ENCODE measurements at regions of chr17 and their contacts with region 1.

Region 1: GRCh38 chr17:67441052-67441927 is 64.2 kb downstream of the PITPNC1 start:
- DNase-seq: peak; percentile 90
- ATAC-seq: peak; percentile 90
- H3K4me3 Mint-ChIP-seq: peak overlapping the region; percentile 77
- H3K27ac Mint-ChIP-seq: peak overlapping the region; percentile 97
- H3K4me1 Mint-ChIP-seq: peaks cover 71% of the 10 kb centered on the region
- H3K27me3 Mint-ChIP-seq: no peaks in the 10 kb centered on the region
- CTCF ChIP-seq: no peak

Region 2: GRCh38 chr17:67353929-67354574 is 87.2 kb before region 1 on chr17:
- CTCF ChIA-PET with region 1: no interaction called
- POLR2A ChIA-PET with region 1: no interaction called
- intact Hi-C with region 1: no loop called
- DNase-seq: no peak
- ATAC-seq: no peak
- H3K4me3 Mint-ChIP-seq: no peak overlapping the region
- H3K27ac Mint-ChIP-seq: no peak overlapping the region
- H3K4me1 Mint-ChIP-seq: peaks cover 19% of the 10 kb centered on the region
- H3K27me3 Mint-ChIP-seq: no peaks in the 10 kb centered on the region
- CTCF ChIP-seq: no peak

Region 3: GRCh38 chr17:67421869-67422273 is 19.4 kb before region 1 on chr17:
- CTCF ChIA-PET with region 1: interaction called, 3 read pairs
- POLR2A ChIA-PET with region 1: interaction called, 5 read pairs
- intact Hi-C with region 1: loop called (anchors 2 kb)
- DNase-seq: peak; percentile 71
- ATAC-seq: peak; percentile 95
- H3K4me3 Mint-ChIP-seq: peak overlapping the region; percentile 33
- H3K27ac Mint-ChIP-seq: peak overlapping the region; percentile 88
- H3K4me1 Mint-ChIP-seq: peaks cover 86% of the 10 kb centered on the region
- H3K27me3 Mint-ChIP-seq: no peaks in the 10 kb centered on the region
- CTCF ChIP-seq: no peak

Region 4: DNA sequence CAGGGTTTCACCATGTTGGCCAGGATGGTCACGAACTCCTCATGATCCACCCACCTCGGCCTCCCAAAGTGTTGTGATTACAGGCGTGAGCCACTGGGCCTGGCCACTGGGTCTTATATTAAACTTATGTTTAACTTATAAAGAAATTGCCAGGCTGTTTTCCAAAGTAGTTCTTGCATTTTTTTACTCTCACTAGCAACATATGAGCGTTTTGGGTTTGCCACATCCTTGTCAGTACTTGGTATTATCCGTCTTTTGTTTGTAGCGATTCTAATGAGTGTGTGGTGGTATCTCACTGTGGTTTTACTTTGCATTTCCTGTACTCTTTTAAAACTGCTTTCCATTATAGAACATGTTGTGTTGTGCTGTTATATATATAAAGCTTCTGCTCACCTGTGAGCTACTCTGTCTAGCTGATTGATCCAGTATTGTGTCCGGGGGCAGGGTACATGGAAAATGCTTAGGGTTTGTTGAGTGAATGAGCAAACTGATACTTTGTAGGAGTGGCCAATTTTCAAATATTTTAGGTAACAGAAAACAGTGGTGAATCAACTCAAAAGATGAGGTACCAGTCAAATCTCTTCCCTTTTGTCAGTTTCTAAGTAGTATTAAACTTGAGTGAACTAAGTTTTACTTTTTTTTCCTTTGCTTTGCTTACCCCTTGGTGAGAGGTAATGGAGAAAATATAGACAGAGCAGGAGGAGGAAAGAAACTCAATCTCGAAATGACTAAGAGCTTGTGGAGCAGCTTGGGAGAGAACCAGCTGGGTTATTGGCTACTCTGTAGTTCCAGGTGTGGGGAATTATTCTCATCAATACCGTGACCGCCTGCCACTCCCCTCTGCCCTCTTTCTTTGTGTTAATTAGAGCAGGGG is 11.6 kb after region 1 on chr17:
- CTCF ChIA-PET with region 1: interaction called, 9 read pairs
- POLR2A ChIA-PET with region 1: interaction called, 57 read pairs
- intact Hi-C with region 1: no loop called
- DNase-seq: peak; percentile 62
- ATAC-seq: peak; percentile 82
- H3K4me3 Mint-ChIP-seq: peak overlapping the region; percentile 72
- H3K27ac Mint-ChIP-seq: peak overlapping the region; percentile 98
- H3K4me1 Mint-ChIP-seq: peaks cover 83% of the 10 kb centered on the region
- H3K27me3 Mint-ChIP-seq: no peaks in the 10 kb centered on the region
- CTCF ChIP-seq: no peak

Region 5: DNA sequence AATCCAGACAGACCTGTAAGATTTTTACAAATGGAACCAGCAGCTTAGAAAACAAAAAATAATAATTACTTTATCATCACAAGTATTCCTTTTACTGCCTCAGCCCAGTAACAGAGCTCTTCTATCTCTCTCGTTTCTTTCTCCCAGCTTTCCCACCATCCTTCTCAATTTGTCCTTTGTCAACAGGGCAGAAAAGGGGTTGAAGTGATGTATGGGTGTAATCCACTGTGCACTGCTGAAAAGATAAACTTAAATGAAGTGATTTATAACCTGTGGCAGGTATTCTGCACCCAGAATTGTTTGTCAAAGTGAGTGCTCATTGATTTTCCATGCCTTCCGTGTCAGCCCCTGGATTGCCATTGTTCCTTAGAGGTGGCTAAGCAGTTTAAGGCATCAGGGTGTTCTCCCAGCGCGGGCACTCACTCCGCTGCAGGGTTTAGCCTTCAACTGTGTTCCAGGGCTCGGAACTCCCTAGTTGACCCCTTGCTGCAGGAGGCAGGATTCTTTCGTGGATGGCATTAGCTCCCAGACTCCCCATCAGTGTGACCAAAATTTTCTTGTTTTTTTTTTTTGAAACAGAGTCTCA is 18.7 kb after region 1 on chr17:
- CTCF ChIA-PET with region 1: interaction called, 7 read pairs
- POLR2A ChIA-PET with region 1: interaction called, 10 read pairs
- intact Hi-C with region 1: no loop called
- DNase-seq: no peak
- ATAC-seq: no peak
- H3K4me3 Mint-ChIP-seq: no peak overlapping the region
- H3K27ac Mint-ChIP-seq: peak overlapping the region; percentile 3
- H3K4me1 Mint-ChIP-seq: peaks cover 72% of the 10 kb centered on the region
- H3K27me3 Mint-ChIP-seq: no peaks in the 10 kb centered on the region
- CTCF ChIP-seq: no peak

Region 6: GRCh38 chr17:67469208-67469895 is 28.1 kb after region 1 on chr17:
- CTCF ChIA-PET with region 1: interaction called, 34 read pairs
- POLR2A ChIA-PET with region 1: interaction called, 39 read pairs
- intact Hi-C with region 1: no loop called
- DNase-seq: peak; percentile 80
- ATAC-seq: peak; percentile 79
- H3K4me3 Mint-ChIP-seq: peak overlapping the region; percentile 66
- H3K27ac Mint-ChIP-seq: peak overlapping the region; percentile 94
- H3K4me1 Mint-ChIP-seq: peaks cover 71% of the 10 kb centered on the region
- H3K27me3 Mint-ChIP-seq: no peaks in the 10 kb centered on the region
- CTCF ChIP-seq: no peak